ENCODE measurements at regions of chr12 and their contacts with region 1.

Region 1: GRCh38 chr12:12442548-12443071 is 85.7 kb downstream of the BORCS5 start:
- DNase-seq: no peak
- ATAC-seq: no peak
- H3K4me3 ChIP-seq: no peak overlapping the region
- H3K27ac ChIP-seq: no peak overlapping the region
- H3K4me1 ChIP-seq: no peaks in the 10 kb centered on the region
- H3K27me3 ChIP-seq: no peaks in the 10 kb centered on the region
- CTCF ChIP-seq: no peak
- EP300 ChIP-seq: no peak
- POLR2A ChIP-seq: no peak
- RAD21 ChIP-seq: no peak

Region 2: DNA sequence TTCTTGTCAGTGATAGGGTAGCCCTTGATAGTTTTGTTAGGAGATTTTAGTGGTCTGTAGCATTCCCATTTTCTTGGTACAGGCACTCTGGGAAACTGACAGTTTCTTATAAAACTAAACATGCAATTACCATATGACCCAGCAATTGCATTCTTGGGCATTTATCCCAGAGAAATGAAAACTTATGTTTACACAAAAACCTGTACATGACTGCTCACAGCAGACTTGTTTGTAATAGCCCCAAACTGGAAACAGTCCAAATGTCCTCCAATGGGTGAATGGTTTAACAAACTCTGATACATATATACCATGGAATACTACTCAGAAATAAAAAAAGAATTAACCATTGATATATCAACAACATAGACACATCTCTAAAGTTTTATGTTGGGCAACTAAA is 10.2 kb before region 1 on chr12:
- CTCF ChIA-PET with region 1: interaction called, 4 read pairs
- POLR2A ChIA-PET with region 1: interaction called, 3 read pairs
- RAD21 ChIA-PET with region 1: interaction called, 4 read pairs
- SMC1A ChIA-PET with region 1: interaction called, 15 read pairs
- in situ Hi-C with region 1: no loop called
- intact Hi-C with region 1: no loop called
- DNase-seq: no peak
- ATAC-seq: no peak
- H3K4me3 ChIP-seq: no peak overlapping the region
- H3K27ac ChIP-seq: no peak overlapping the region
- H3K4me1 ChIP-seq: peaks cover 13% of the 10 kb centered on the region
- H3K27me3 ChIP-seq: no peaks in the 10 kb centered on the region
- CTCF ChIP-seq: no peak
- EP300 ChIP-seq: no peak
- POLR2A ChIP-seq: no peak
- RAD21 ChIP-seq: no peak

Measured in GM12878 (cell line).